H1 (cell line): ENCODE measurements at regions of chr1 and their contacts with region 1.

Region 1: DNA sequence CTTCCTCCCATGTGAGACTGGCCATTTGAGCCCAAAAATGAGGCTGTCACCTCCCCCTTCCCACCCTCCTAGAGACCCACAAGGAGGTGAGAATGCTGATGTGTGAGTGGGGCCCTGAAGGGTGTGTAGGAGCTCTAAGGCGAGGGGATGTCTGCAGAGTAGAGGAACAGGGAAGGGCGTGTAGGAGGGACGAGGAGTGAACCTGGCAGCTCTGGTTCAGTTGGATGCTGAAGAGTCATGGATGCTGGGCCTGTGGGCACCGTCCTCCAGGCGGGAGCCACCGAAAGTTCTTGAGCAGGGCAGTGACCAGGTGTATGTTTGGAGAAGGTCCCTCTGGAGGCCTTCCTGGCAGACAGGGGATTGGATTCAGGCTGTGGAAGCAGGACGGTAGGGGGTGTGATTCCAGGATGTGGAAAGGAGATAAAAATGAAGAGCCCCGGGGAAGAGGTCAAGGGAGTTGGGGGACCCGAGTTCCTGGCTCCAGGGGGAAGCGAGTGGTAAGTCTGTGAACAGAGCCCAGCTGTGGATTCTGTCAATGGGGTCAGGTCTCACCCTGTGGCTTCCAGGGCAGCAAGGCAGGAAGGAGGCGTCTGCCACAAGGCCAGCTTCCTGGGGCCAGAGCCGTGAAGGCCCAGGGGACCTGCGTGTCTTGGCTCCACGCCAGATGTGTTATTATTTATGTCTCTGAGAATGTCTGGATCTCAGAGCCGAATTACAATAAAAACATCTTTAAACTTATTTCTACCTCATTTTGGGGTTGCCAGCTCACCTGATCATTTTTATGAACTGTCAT is 7.9 kb downstream of the SAMD11 start:
- DNase-seq: no peak
- H3K4me3 ChIP-seq: no peak overlapping the region
- H3K27ac ChIP-seq: no peak overlapping the region
- H3K4me1 ChIP-seq: peaks cover 2 to 10% (median 8%) of the 10 kb centered on the region in 4 experiments
- H3K27me3 ChIP-seq: peaks cover 63 to 90% (median 87%) of the 10 kb centered on the region in 4 experiments
- CTCF ChIP-seq: no peak
- EP300 ChIP-seq: no peak
- POLR2A ChIP-seq: no peak
- RAD21 ChIP-seq: no peak

Region 2: GRCh38 chr1:912740-913301 is 18.8 kb before region 1 on chr1:
- CTCF ChIA-PET with region 1: interaction called, 18 read pairs
- POLR2A ChIA-PET with region 1: interaction called, 6 read pairs
- DNase-seq: peak in 1 of 2 experiments; percentile 63
- H3K4me3 ChIP-seq: no peak overlapping the region
- H3K27ac ChIP-seq: no peak overlapping the region
- H3K4me1 ChIP-seq: no peaks in the 10 kb centered on the region; a peak in 1 of 7 replicates
- H3K27me3 ChIP-seq: peaks cover 0 to 72% (median 45%) of the 10 kb centered on the region in 4 experiments; a peak in 6 of 7 replicates
- CTCF ChIP-seq: peak in 2 of 3 experiments; percentile 18 to 52; a peak in 2 of 4 replicates
- EP300 ChIP-seq: no peak
- POLR2A ChIP-seq: no peak
- RAD21 ChIP-seq: no peak; a peak in 1 of 4 replicates